ENCODE measurements at regions of chr15 and their contacts with region 1.

Region 1: DNA sequence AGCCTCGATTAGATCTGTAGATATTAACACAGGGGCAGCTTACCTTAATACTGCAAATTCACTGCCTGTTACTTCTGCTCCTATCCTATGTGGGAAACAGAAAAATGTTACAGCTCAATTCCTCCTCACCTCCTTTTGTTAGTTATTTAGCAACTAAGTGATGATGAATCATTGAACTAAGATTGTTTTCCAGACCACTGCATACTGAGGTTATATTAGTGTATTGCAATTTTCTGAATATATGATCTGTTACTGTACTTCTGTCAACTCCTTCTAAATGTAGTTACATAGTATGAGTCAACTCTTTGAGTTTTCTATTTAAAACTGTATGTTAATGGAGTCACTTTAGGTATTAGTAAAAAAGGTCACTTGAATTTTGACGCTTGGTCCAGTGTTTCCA is 331.5 kb upstream of the SLCO3A1 start:
- DNase-seq: no peak
- H3K4me3 ChIP-seq: no peak overlapping the region
- H3K4me3 Mint-ChIP-seq: no peak overlapping the region
- H3K27ac ChIP-seq: no peak overlapping the region
- H3K27ac Mint-ChIP-seq: no peak overlapping the region
- H3K4me1 ChIP-seq: peaks cover 20% of the 10 kb centered on the region
- H3K4me1 Mint-ChIP-seq: peaks cover 24 to 57% (median 41%) of the 10 kb centered on the region in 3 donors
- H3K27me3 ChIP-seq: no peaks in the 10 kb centered on the region
- H3K27me3 Mint-ChIP-seq: peaks cover 8 to 11% of the 10 kb centered on the region in 2 donors

Region 2: GRCh38 chr15:91302588-91303439 is 219.2 kb before region 1 on chr15:
- CTCF ChIA-PET with region 1: interaction called, 14 read pairs
- POLR2A ChIA-PET with region 1: no interaction called
- DNase-seq: peak in 3 of 5 donors; percentile 45 to 49 (median 48)
- H3K4me3 ChIP-seq: no peak overlapping the region
- H3K4me3 Mint-ChIP-seq: peak overlapping the region in 5 of 7 donors; percentile 19 to 68 (median 33)
- H3K27ac ChIP-seq: no peak overlapping the region
- H3K27ac Mint-ChIP-seq: peak overlapping the region in 2 of 8 donors; percentile 48 to 51
- H3K4me1 ChIP-seq: peaks cover 38% of the 10 kb centered on the region
- H3K4me1 Mint-ChIP-seq: peaks cover 33 to 47% (median 46%) of the 10 kb centered on the region in 3 donors
- H3K27me3 ChIP-seq: no peaks in the 10 kb centered on the region
- H3K27me3 Mint-ChIP-seq: peaks cover 18 to 30% of the 10 kb centered on the region in 2 donors